ENCODE measurements at regions of chr2 and their contacts with region 1.

Region 1: DNA sequence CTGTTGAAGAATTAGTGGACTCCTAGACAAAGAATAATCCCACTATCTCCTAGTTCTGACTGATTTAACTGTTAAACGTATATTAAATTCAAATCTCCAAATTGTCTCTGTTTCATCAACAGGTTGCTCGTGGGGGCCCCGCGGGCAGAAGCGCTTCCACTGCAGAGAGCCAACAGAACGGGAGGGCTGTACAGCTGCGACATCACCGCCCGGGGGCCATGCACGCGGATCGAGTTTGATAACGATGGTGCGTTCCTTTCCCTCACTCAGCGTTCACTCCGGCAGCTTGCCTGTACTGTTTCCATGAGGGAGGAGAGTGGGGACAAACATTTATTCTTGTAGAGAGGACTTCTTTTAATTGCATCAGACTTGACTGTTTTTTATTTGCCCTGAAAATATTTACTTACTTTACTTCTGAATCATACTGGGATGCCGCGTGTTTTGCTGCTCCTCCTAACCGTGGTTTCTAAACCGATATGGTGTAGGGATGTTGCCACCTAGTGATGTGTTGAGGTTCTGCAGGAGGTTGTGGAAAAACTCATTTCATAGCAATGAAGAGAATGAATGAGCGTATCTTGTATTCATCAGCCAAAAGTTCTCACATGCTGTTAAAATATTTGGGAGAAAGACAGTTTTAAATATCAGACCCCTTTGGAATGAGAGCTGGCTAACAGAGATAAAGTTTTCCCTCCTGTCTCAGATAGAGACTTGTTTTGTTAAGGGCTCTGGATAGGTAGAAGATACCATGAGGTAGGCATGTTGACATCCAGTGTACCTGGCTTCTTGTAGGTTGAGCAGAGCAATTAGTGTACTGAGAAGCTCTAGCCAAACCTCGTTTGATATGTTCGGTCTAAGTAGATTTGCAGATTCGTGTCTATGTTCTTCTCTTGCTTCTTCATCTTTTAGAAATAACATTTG is 38.3 kb downstream of the ITGA6 start:
- DNase-seq: peak in 4 of 5 donors; percentile 46 to 58 (median 55)
- ATAC-seq: peak; percentile 69 to 78 (median 72)
- H3K4me3 ChIP-seq: peak overlapping the region in 8 of 12 donors; percentile 9 to 36 (median 21)
- H3K27ac ChIP-seq: peak overlapping the region in 4 of 12 donors; percentile 4 to 78 (median 15)
- H3K4me1 ChIP-seq: peaks cover 0 to 49% (median 28%) of the 10 kb centered on the region in 12 donors
- H3K27me3 ChIP-seq: peaks cover 0 to 4% (median 0%) of the 10 kb centered on the region in 9 donors
- CTCF ChIP-seq: peak; percentile 74 to 92 (median 86)
- POLR2A ChIP-seq: no peak

Region 2: DNA sequence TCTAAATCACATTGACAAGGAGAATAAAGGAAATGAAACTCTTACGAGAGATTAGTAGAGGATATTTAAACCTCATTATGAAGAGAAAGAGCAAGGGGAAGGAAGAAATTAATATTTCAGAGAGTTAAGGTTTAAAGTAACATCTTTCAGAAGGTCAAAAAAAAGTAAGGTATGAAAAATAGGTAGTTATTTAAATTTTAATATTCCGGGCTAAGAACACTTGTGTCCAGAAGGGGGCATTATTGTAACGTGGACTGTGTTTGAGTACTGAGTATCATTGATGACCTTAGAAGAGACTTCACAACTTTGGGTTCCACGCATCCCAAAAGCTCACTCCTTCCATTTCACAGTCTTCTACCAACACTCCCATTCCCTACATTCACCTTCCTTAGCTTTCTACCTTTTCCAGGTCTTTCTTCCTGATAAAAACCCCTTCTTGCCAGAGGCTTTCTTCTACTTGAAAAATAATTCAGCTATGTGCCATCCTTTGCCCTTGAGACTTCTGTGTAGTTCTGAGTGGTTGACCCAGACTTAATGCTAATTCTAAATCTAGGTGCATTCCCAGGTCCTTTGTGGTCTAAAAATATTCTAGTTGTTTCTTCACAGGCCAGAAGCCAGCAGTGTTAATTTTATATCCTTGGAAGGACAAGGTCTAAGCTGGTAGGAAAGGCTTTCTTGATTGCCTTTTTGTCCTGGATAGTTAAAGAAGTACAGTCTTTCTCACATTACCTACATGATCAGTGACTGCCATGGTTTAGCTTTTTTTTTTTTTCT is 761.9 kb before region 1 on chr2:
- intact Hi-C with region 1: loop called in 2 of 10 experiments (anchors 5 to 10 kb)
- DNase-seq: no peak
- ATAC-seq: peak; percentile 20 to 75 (median 52)
- H3K4me3 ChIP-seq: no peak overlapping the region
- H3K27ac ChIP-seq: peak overlapping the region in 10 of 12 donors; percentile 9 to 69 (median 43)
- H3K4me1 ChIP-seq: peaks cover 0 to 41% (median 16%) of the 10 kb centered on the region in 12 donors
- H3K27me3 ChIP-seq: no peaks in the 10 kb centered on the region
- CTCF ChIP-seq: peak; percentile 17 to 58 (median 38)
- POLR2A ChIP-seq: no peak

Region 3: GRCh38 chr2:172270278-172271079 is 195.2 kb before region 1 on chr2:
- intact Hi-C with region 1: loop called in 4 of 10 experiments (anchors 5 to 10 kb)
- DNase-seq: no peak
- ATAC-seq: no peak
- H3K4me3 ChIP-seq: no peak overlapping the region
- H3K27ac ChIP-seq: peak overlapping the region in 1 of 12 donors; percentile 26
- H3K4me1 ChIP-seq: no peaks in the 10 kb centered on the region
- H3K27me3 ChIP-seq: no peaks in the 10 kb centered on the region
- CTCF ChIP-seq: no peak
- POLR2A ChIP-seq: no peak

Region 4: GRCh38 chr2:172339371-172340010 is 126.2 kb before region 1 on chr2:
- intact Hi-C with region 1: loop called in 2 of 10 experiments (anchors 5 to 10 kb)
- DNase-seq: no peak
- ATAC-seq: peak in 2 of 4 donors; percentile 22 to 24
- H3K4me3 ChIP-seq: no peak overlapping the region
- H3K27ac ChIP-seq: peak overlapping the region in 7 of 12 donors; percentile 14 to 58 (median 35)
- H3K4me1 ChIP-seq: peaks cover 0 to 31% (median 18%) of the 10 kb centered on the region in 12 donors
- H3K27me3 ChIP-seq: no peaks in the 10 kb centered on the region
- CTCF ChIP-seq: peak in 2 of 12 donors; percentile 6 to 29
- POLR2A ChIP-seq: no peak

Measured in heart left ventricle (tissue), 16 donors.